ENCODE measurements at regions of chr9 and their contacts with region 1.

Region 1: DNA sequence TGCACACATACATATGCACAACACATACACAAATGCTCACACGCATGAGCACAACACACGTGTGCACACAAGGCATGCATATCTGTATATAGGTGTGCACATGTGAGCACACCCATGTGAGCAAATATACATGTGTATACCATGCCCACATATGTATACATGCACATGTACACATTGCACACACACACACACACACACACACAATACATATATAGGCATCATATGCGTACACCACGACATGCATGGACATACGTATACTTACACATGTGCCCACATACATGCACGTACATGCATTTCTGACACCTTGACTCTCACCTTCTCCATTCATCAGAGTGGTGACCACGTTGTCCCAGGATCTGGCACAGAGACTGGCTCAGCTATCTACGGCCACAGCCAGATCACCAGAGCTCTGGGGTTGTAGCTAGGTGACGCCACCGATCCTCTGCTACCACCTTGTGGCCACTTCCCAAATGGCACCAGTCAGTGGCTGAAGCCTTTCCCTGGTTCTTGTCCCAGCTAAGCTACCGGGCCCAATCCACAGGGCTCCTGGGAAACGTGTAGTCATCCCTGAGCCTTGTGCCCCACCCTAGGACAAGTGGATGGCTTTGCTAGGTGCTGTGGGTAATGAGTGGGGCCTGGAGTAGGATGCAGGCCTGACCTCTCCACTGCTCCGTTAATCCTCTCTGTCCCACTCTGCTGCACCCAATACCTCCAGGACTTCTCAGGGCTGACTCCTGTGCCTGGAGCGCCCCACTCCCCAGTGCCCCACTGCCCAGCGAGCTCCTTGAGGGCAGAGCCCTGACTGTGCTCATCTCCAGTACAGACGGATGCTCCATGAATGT is 194.4 kb downstream of the RGS3 start:
- DNase-seq: peak; percentile 76 to 98
- H3K4me3 ChIP-seq: no peak overlapping the region
- H3K27ac ChIP-seq: no peak overlapping the region
- H3K4me1 ChIP-seq: peaks cover 0 to 12% (median under 1%) of the 10 kb centered on the region in 4 experiments; a peak in 6 of 7 replicates
- H3K27me3 ChIP-seq: no peaks in the 10 kb centered on the region
- CTCF ChIP-seq: peak; percentile 96 to 99 (median 97)
- EP300 ChIP-seq: no peak
- POLR2A ChIP-seq: no peak
- RAD21 ChIP-seq: peak; percentile 99 to 100

Region 2: GRCh38 chr9:113309204-113309813 is 348.6 kb before region 1 on chr9:
- CTCF ChIA-PET with region 1: interaction called, 11 read pairs
- POLR2A ChIA-PET with region 1: no interaction called
- DNase-seq: no peak
- H3K4me3 ChIP-seq: no peak overlapping the region
- H3K27ac ChIP-seq: no peak overlapping the region
- H3K4me1 ChIP-seq: no peaks in the 10 kb centered on the region
- H3K27me3 ChIP-seq: no peaks in the 10 kb centered on the region; a peak in 1 of 7 replicates
- CTCF ChIP-seq: peak in 2 of 3 experiments; percentile 39 to 43; a peak in 2 of 4 replicates
- EP300 ChIP-seq: no peak
- POLR2A ChIP-seq: no peak
- RAD21 ChIP-seq: peak; percentile 79 to 80

Region 3: DNA sequence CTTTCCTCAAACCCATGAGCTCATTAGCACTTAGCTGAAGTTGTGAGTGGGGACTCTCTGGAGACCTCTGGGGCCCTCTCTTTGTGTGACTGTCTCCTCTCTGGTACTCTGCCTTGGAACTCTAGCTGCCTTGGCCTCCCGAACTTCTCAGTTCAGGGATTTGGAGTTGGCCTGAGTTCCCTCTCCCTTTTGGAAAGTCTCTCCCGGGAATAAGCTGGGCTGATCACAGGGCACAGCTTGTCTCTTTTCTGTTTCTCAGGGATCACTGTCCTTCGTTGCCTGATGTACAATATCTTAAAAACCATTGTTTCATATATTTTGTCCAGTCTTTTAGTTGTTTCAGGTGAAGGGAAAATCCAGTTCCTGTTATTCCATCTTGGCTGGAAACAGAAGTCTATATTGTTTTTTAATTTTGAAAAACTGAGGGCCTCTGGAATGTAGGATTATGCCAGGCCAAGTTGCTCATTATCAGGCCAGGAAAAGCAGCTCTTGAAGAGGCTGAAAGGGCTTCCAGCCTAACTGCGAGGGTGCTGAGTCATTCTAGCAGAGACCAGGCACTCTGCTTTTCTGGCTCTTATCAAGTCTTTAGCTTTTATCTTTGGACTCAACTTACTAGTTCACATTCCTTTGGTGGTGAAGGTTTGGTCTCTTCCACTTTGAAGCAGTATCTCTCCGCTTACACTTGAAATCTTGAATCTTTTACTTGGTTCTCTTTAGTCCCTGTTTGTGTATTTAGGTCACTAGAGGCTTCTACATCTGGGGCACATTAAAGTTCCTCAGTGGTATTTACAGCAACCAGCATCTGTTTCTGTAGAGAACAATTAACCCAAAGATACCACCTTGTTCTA is 202.8 kb before region 1 on chr9:
- CTCF ChIA-PET with region 1: interaction called, 150 read pairs
- POLR2A ChIA-PET with region 1: interaction called, 3 read pairs
- DNase-seq: no peak
- H3K4me3 ChIP-seq: no peak overlapping the region
- H3K27ac ChIP-seq: no peak overlapping the region
- H3K4me1 ChIP-seq: peaks cover 0 to 5% (median 2%) of the 10 kb centered on the region in 4 experiments; a peak in 5 of 7 replicates
- H3K27me3 ChIP-seq: no peaks in the 10 kb centered on the region
- CTCF ChIP-seq: no peak
- EP300 ChIP-seq: no peak
- POLR2A ChIP-seq: no peak
- RAD21 ChIP-seq: no peak

Region 4: GRCh38 chr9:113516840-113517577 is 140.9 kb before region 1 on chr9:
- CTCF ChIA-PET with region 1: interaction called, 10 read pairs
- POLR2A ChIA-PET with region 1: no interaction called
- DNase-seq: no peak
- H3K4me3 ChIP-seq: no peak overlapping the region
- H3K27ac ChIP-seq: no peak overlapping the region
- H3K4me1 ChIP-seq: no peaks in the 10 kb centered on the region
- H3K27me3 ChIP-seq: no peaks in the 10 kb centered on the region
- CTCF ChIP-seq: no peak
- EP300 ChIP-seq: no peak
- POLR2A ChIP-seq: no peak
- RAD21 ChIP-seq: no peak

Region 5: GRCh38 chr9:113572076-113572861 is 85.7 kb before region 1 on chr9:
- CTCF ChIA-PET with region 1: interaction called, 38 read pairs
- POLR2A ChIA-PET with region 1: no interaction called
- DNase-seq: no peak
- H3K4me3 ChIP-seq: no peak overlapping the region
- H3K27ac ChIP-seq: no peak overlapping the region
- H3K4me1 ChIP-seq: peaks cover 0 to 14% (median 7%) of the 10 kb centered on the region in 4 experiments; a peak in 6 of 7 replicates
- H3K27me3 ChIP-seq: no peaks in the 10 kb centered on the region
- CTCF ChIP-seq: no peak
- EP300 ChIP-seq: no peak
- POLR2A ChIP-seq: no peak
- RAD21 ChIP-seq: no peak

Region 6: GRCh38 chr9:113614843-113615648 is 42.9 kb before region 1 on chr9:
- CTCF ChIA-PET with region 1: interaction called, 71 read pairs
- POLR2A ChIA-PET with region 1: interaction called, 8 read pairs
- DNase-seq: no peak
- H3K4me3 ChIP-seq: no peak overlapping the region
- H3K27ac ChIP-seq: no peak overlapping the region
- H3K4me1 ChIP-seq: peaks cover 8 to 18% (median 10%) of the 10 kb centered on the region in 4 experiments
- H3K27me3 ChIP-seq: no peaks in the 10 kb centered on the region; a peak in 2 of 7 replicates
- CTCF ChIP-seq: no peak
- EP300 ChIP-seq: no peak
- POLR2A ChIP-seq: no peak
- RAD21 ChIP-seq: no peak

Region 7: DNA sequence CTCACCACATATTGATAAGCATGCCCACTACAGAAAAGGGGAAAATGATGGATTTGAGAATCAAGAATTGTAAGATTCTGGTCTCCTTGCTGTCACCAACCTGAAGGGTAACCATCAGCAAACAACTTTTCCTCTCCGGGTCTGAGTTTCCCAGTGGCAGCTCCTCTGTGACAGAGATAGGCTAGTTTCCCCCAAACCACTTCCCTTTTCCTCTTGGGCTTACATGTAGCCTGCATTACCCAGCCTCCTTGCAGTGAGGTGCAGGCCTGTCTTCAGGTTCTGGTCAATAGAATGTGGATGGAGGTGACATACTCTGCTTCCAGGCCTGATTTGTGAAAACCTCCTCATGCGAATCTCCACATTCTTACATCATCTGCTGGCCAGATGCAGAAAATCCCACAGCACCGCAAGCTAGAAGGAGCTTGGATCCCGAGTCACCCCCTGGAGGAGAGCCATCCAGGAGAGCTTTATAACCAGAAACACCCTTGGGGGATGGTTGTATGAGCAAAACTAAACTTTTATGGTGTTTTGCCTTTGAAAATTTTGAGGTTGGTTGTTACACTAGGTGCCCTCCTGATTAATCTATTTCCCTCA is 11.7 kb after region 1 on chr9:
- CTCF ChIA-PET with region 1: interaction called, 47 read pairs
- POLR2A ChIA-PET with region 1: no interaction called
- DNase-seq: no peak
- H3K4me3 ChIP-seq: no peak overlapping the region
- H3K27ac ChIP-seq: no peak overlapping the region
- H3K4me1 ChIP-seq: peaks cover 0 to 6% (median 0%) of the 10 kb centered on the region in 4 experiments; a peak in 1 of 7 replicates
- H3K27me3 ChIP-seq: no peaks in the 10 kb centered on the region
- CTCF ChIP-seq: no peak
- EP300 ChIP-seq: no peak
- POLR2A ChIP-seq: no peak
- RAD21 ChIP-seq: no peak